ENCODE measurements at regions of chr20 and their contacts with region 1.

Region 1: DNA sequence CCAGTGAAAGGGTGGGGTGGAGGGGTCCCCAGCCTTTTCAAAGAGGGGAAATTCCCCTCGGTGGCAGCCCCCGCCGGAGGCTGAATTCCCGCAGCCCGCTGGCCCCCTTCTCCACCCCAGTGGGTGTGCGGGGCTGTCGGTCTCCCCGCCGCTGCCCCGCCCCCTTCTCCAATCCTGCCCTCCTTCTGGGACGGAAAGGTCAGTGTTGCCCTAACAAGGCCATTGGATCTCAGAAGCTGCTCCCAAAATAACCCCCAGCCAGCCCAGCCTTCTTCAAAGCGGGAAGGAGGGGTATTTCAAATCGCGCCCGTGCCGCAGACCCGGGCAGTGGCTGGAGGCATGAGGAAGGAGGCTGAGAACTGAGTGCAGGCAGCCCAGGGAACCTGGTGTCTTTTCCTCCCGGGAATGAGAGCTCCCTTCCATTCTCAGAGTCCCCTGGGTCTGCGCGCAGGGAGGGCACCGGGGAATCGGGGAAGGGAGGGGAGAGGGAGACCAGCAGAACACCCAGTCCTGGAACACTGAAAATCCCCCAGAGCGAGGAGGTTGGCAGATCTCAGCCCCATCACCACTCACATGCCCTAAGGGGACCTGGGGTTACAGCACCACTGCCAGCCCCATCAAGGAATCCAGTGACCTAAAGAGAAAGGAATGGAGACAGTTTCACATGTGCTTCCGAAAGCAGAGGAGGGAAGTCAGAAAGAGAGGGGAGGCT is at the start of gene JPH2:
- DNase-seq: peak; percentile 74
- ATAC-seq: peak; percentile 75
- H3K4me3 Mint-ChIP-seq: peak within 1 kb of the TSS; percentile 71
- H3K27ac Mint-ChIP-seq: no peak within 1 kb of the TSS
- H3K4me1 Mint-ChIP-seq: peaks cover 9% of the 10 kb centered on the region
- H3K27me3 Mint-ChIP-seq: no peaks in the 10 kb centered on the region; the same call in none of the 2 replicates
- CTCF ChIP-seq: no peak
- total RNA-seq, gene JPH2: 0.81 to 1.1 TPM (median 0.94 TPM) in 3 replicates

Region 2: GRCh38 chr20:44109951-44110361 is 77.3 kb before region 1 on chr20:
- CTCF ChIA-PET with region 1: interaction called, 40 read pairs
- POLR2A ChIA-PET with region 1: no interaction called
- DNase-seq: peak; percentile 59
- ATAC-seq: peak; percentile 92
- H3K4me3 Mint-ChIP-seq: no peak overlapping the region
- H3K27ac Mint-ChIP-seq: no peak overlapping the region
- H3K4me1 Mint-ChIP-seq: 0 out of 2 replicates have a peak, but pooled peaks cover 2% of the 10 kb centered on the region
- H3K27me3 Mint-ChIP-seq: peaks cover 11% of the 10 kb centered on the region
- CTCF ChIP-seq: peak; percentile 40

Region 3: DNA sequence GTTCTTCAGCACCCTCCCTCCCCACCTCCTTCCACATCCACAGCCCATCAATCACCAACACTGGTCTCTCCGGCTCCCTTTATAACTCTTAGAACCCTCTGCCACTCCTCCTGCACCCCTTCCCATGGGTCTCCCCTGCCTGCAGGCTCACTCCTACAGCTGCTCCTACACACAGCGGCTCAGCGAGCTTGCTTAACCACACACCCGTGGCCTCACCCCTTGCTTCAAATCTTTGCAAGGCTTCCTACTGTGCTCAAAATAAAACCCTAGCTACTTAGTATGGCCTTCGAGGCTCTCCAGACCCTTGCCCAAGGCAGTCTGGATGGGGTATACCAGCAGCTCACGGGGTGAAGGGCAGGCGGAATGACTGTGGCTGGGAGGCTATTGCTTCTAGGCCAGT is 64.0 kb before region 1 on chr20:
- CTCF ChIA-PET with region 1: interaction called, 368 read pairs
- POLR2A ChIA-PET with region 1: interaction called, 3 read pairs
- DNase-seq: no peak
- ATAC-seq: no peak
- H3K4me3 Mint-ChIP-seq: no peak overlapping the region
- H3K27ac Mint-ChIP-seq: no peak overlapping the region
- H3K4me1 Mint-ChIP-seq: no peaks in the 10 kb centered on the region
- H3K27me3 Mint-ChIP-seq: no peaks in the 10 kb centered on the region; the same call in 1 of the 2 replicates
- CTCF ChIP-seq: no peak

Region 4: GRCh38 chr20:44129911-44130718 is 57.1 kb before region 1 on chr20:
- CTCF ChIA-PET with region 1: interaction called, 49 read pairs
- POLR2A ChIA-PET with region 1: no interaction called
- DNase-seq: no peak
- ATAC-seq: peak; percentile 43; the same call in 1 of the 2 replicates
- H3K4me3 Mint-ChIP-seq: no peak overlapping the region
- H3K27ac Mint-ChIP-seq: no peak overlapping the region; the same call in 1 of the 2 replicates
- H3K4me1 Mint-ChIP-seq: peaks cover 5% of the 10 kb centered on the region; the same call in 1 of the 2 replicates
- H3K27me3 Mint-ChIP-seq: no peaks in the 10 kb centered on the region
- CTCF ChIP-seq: no peak

Region 5: DNA sequence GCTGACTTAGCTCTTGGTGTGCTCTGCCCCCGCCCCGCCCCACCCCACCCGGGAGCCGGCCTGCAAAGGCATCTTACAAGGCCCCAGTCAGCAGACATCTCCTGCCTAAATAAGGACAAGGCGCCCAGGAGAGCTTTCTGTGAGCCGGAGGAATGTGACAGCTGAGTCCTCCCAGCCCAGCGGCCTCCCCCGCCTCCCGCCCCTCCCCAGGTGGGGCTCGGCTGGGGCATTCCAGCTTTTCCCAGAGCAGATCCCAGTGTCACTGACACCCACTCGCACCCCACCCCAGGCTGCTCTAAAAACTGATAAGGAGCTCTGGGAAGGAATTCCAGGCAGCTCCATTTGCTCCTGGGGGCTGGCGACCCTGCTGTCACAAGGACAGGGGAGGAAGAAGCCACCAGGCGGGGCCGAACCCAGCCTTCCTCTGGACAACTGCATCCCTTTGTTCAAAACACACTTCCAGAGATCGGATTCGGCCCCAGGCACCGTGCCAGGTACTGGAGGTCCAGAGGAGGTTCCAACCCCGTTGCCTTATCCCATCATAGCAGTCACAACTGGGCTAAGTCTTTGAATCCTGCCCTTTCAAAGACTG is 49.9 kb before region 1 on chr20:
- CTCF ChIA-PET with region 1: interaction called, 49 read pairs
- POLR2A ChIA-PET with region 1: interaction called, 5 read pairs
- DNase-seq: peak; percentile 52
- ATAC-seq: peak; percentile 70
- H3K4me3 Mint-ChIP-seq: no peak overlapping the region
- H3K27ac Mint-ChIP-seq: no peak overlapping the region
- H3K4me1 Mint-ChIP-seq: peaks cover 8% of the 10 kb centered on the region; the same call in 1 of the 2 replicates
- H3K27me3 Mint-ChIP-seq: no peaks in the 10 kb centered on the region
- CTCF ChIP-seq: no peak

Region 6: GRCh38 chr20:44142413-44142812 is 44.8 kb before region 1 on chr20:
- CTCF ChIA-PET with region 1: interaction called, 49 read pairs
- POLR2A ChIA-PET with region 1: interaction called, 5 read pairs
- DNase-seq: no peak
- ATAC-seq: no peak
- H3K4me3 Mint-ChIP-seq: no peak overlapping the region
- H3K27ac Mint-ChIP-seq: no peak overlapping the region; the same call in 1 of the 2 replicates
- H3K4me1 Mint-ChIP-seq: peaks cover 5% of the 10 kb centered on the region; the same call in 1 of the 2 replicates
- H3K27me3 Mint-ChIP-seq: peaks cover 5% of the 10 kb centered on the region; the same call in 1 of the 2 replicates
- CTCF ChIP-seq: no peak

Region 7: GRCh38 chr20:44160133-44160532 is 27.1 kb before region 1 on chr20:
- CTCF ChIA-PET with region 1: interaction called, 12 read pairs
- POLR2A ChIA-PET with region 1: interaction called, 3 read pairs
- DNase-seq: no peak
- ATAC-seq: no peak
- H3K4me3 Mint-ChIP-seq: no peak overlapping the region
- H3K27ac Mint-ChIP-seq: no peak overlapping the region
- H3K4me1 Mint-ChIP-seq: peaks cover 3% of the 10 kb centered on the region; the same call in 1 of the 2 replicates
- H3K27me3 Mint-ChIP-seq: no peaks in the 10 kb centered on the region
- CTCF ChIP-seq: no peak

Region 8: GRCh38 chr20:44271915-44272663 is 84.9 kb after region 1 on chr20:
- CTCF ChIA-PET with region 1: no interaction called
- POLR2A ChIA-PET with region 1: no interaction called
- DNase-seq: peak; percentile 71
- ATAC-seq: peak; percentile 95
- H3K4me3 Mint-ChIP-seq: no peak overlapping the region
- H3K27ac Mint-ChIP-seq: no peak overlapping the region
- H3K4me1 Mint-ChIP-seq: no peaks in the 10 kb centered on the region
- H3K27me3 Mint-ChIP-seq: no peaks in the 10 kb centered on the region
- CTCF ChIP-seq: peak; percentile 34; the same call in 1 of the 2 replicates

Measured in WTC11 (cell line).